CD4-positive, alpha-beta memory T cell (primary cell): ENCODE measurements at regions of chrX and their contacts with region 1.

Region 1: GRCh38 chrX:18984381-18985185 is 669 bp upstream of the PHKA2 start:
- DNase-seq: peak; percentile 85 to 89 (median 87)
- H3K4me3 ChIP-seq: peak overlapping the region in 1 of 2 donors; percentile 63
- H3K4me3 Mint-ChIP-seq: peak overlapping the region; percentile 75 to 88 (median 82)
- H3K27ac ChIP-seq: peak overlapping the region; percentile 70
- H3K27ac Mint-ChIP-seq: peak overlapping the region; percentile 82 to 97 (median 91)
- H3K4me1 ChIP-seq: peaks cover 21% of the 10 kb centered on the region
- H3K4me1 Mint-ChIP-seq: peaks cover 7 to 23% (median 14%) of the 10 kb centered on the region in 4 donors
- H3K27me3 ChIP-seq: no peaks in the 10 kb centered on the region
- H3K27me3 Mint-ChIP-seq: no peaks in the 10 kb centered on the region

Region 2: DNA sequence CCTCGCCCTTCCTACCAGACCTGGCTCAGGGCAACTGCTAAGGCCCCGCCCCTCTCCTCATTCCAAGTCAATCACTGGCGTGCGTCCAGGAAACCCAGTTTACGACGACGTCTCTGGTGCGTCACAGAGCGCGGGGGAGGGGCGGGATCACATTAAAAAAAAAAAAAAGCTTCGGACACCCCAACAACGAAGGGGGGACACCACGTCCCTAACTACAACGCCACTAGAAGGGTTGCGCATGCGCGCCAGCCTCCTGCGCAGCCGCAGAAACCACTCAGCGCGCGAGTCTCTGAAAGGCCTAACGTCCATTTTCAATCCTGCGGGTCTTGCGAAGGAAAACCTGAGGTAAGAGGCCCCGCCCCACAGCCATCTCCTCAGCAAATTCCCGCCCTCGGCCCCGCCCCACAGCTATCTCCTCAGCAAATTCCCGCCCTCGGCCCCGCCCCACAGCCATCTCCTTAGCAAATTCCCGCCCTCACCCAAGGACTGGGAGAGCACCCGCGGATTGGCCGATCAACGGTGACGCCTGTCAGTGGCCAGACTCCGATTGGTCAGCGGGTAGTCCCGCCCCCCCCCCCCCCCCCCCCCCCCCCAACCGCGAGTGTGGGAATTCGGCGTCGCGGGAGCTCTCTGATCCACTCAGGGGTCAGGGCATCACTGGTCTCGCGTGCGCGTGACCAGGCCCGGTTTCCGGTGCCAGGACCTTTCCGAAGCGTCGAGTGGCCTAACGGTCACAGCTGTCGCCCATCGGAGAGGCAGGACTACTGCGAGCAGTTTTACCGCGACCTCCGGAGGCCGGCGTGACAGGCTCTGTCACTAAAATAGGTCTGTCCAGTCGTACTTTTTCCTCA is 1247.5 kb before region 1 on chrX and contains the start of gene SCML1:
- CTCF ChIA-PET with region 1: no interaction called
- POLR2A ChIA-PET with region 1: no interaction called
- intact Hi-C with region 1: loop called (anchors 10 kb)
- DNase-seq: peak; percentile 78 to 90 (median 82)
- H3K4me3 ChIP-seq: peak within 1 kb of the TSS in 1 of 2 donors; percentile 50
- H3K4me3 Mint-ChIP-seq: peak within 1 kb of the TSS; percentile 86 to 97 (median 90)
- H3K27ac ChIP-seq: peak within 1 kb of the TSS; percentile 73
- H3K27ac Mint-ChIP-seq: peak within 1 kb of the TSS; percentile 86 to 98 (median 90)
- H3K4me1 ChIP-seq: peaks cover 15% of the 10 kb centered on the region
- H3K4me1 Mint-ChIP-seq: peaks cover 11 to 33% (median 22%) of the 10 kb centered on the region in 4 donors
- H3K27me3 ChIP-seq: no peaks in the 10 kb centered on the region
- H3K27me3 Mint-ChIP-seq: peaks cover 0 to 3% of the 10 kb centered on the region in 2 donors
- total RNA-seq, gene SCML1: 14.4 to 18.0 TPM

Region 3: DNA sequence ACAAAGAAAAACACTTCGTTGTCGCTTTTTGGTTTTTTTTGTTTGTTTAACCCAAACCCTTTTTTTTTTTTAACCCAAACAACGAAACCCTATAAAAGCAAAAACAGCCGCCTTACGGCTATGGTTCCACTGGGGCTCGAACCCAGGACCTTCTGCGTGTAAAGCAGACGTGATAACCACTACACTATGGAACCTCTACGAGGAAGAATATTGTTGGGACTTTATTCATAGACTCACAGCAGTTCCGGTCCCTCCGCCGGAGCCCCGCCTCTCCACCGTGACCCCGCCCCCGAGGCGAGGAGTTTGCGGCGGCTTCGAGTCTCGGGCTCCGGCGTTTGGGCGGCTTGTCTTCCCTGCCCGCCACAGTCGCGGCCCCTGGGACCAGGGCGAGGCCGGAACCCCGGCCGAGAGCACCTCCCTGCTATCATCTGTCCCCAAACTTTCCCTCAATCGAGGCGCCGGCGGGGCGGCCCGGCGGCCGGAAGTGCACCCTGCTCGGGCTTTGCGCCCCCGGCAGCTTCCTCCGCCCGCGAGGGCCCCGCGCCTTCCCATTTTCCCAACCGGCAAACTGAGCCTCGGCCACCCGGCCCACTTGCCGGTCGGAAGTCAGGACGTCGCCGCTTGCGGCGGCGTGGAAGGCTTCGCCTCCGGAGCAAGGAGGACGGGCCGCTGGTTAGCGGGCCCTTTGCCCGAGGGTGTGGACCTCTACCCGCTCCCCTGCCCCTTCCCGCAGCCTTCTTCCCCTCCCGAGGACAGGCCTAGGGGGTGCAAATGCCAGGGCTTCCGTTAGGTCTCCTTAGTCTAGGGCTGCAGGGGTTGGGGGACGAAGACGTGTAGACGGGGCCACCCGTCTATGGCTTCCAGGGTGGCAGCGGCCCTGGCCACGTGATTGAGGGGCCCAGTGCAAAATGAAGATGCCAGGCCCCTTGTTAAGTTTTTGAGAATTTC is 309.5 kb before region 1 on chrX:
- CTCF ChIA-PET with region 1: no interaction called
- POLR2A ChIA-PET with region 1: interaction called, 3 read pairs
- intact Hi-C with region 1: loop called (anchors 2 kb)
- DNase-seq: peak; percentile 80 to 87 (median 86)
- H3K4me3 ChIP-seq: peak overlapping the region; percentile 11 to 54
- H3K4me3 Mint-ChIP-seq: peak overlapping the region; percentile 78 to 87 (median 84)
- H3K27ac ChIP-seq: peak overlapping the region; percentile 67
- H3K27ac Mint-ChIP-seq: peak overlapping the region; percentile 46 to 97 (median 82)
- H3K4me1 ChIP-seq: no peaks in the 10 kb centered on the region
- H3K4me1 Mint-ChIP-seq: peaks cover 4 to 16% (median 8%) of the 10 kb centered on the region in 4 donors
- H3K27me3 ChIP-seq: no peaks in the 10 kb centered on the region
- H3K27me3 Mint-ChIP-seq: no peaks in the 10 kb centered on the region

Region 4: DNA sequence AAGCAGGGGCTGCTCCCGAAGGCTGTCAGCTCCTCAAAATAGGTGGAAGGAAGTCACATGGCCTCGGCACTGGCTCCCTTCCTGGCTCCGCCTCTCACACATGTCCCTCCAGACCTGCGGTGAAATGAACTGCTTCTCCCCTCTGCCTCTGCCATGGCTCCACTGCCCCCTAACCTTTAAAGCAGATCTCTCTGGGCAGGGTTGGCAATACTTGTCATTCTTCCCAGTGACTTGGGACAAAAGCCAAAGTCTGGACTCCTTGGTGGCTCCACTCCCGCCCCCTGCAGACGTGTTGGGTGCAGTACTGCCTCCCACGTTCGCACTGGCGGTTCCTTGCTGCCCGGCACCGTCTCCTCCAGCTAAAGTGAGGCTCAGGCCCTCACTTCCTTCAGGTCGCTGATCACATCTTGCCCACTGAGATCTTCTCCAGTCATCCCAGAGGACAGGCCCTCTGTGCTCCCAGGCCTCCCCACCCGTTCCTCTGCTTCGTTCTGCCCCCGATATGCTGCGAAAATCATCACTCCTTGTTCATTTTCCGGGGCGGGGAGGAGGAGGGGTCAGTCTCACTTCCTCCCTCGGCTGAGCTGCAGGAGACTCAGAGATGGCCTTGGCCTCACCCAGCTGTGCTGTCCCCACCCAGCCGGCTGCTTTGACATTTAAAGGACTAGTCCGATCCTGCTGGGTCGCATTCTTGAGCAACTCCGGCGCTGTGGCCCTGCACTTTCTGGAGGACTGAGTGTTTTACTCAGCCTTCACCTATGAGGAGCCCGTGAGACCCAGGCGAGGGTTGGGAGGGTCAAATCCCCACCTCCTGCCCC is 98.0 kb before region 1 on chrX:
- CTCF ChIA-PET with region 1: no interaction called
- POLR2A ChIA-PET with region 1: interaction called, 4 read pairs
- intact Hi-C with region 1: loop called (anchors 1 kb)
- DNase-seq: peak; percentile 32 to 42 (median 42)
- H3K4me3 ChIP-seq: peak overlapping the region in 1 of 2 donors; percentile 56
- H3K4me3 Mint-ChIP-seq: peak overlapping the region; percentile 84 to 94 (median 90)
- H3K27ac ChIP-seq: peak overlapping the region; percentile 28
- H3K27ac Mint-ChIP-seq: peak overlapping the region; percentile 82 to 98 (median 92)
- H3K4me1 ChIP-seq: peaks cover 14% of the 10 kb centered on the region
- H3K4me1 Mint-ChIP-seq: peaks cover 12 to 32% (median 20%) of the 10 kb centered on the region in 4 donors
- H3K27me3 ChIP-seq: no peaks in the 10 kb centered on the region
- H3K27me3 Mint-ChIP-seq: no peaks in the 10 kb centered on the region

Region 5: GRCh38 chrX:19094654-19095053 is 110.1 kb after region 1 on chrX:
- CTCF ChIA-PET with region 1: no interaction called
- POLR2A ChIA-PET with region 1: no interaction called
- intact Hi-C with region 1: no loop called
- DNase-seq: no peak
- H3K4me3 ChIP-seq: no peak overlapping the region
- H3K4me3 Mint-ChIP-seq: no peak overlapping the region
- H3K27ac ChIP-seq: no peak overlapping the region
- H3K27ac Mint-ChIP-seq: no peak overlapping the region
- H3K4me1 ChIP-seq: no peaks in the 10 kb centered on the region
- H3K4me1 Mint-ChIP-seq: no peaks in the 10 kb centered on the region
- H3K27me3 ChIP-seq: no peaks in the 10 kb centered on the region
- H3K27me3 Mint-ChIP-seq: peaks cover 3% of the 10 kb centered on the region in 2 donors

Region 6: GRCh38 chrX:19334945-19335626 is 350.5 kb after region 1 on chrX:
- CTCF ChIA-PET with region 1: interaction called, 3 read pairs
- POLR2A ChIA-PET with region 1: no interaction called
- intact Hi-C with region 1: loop called (anchors 2 kb)
- DNase-seq: peak in 3 of 5 donors; percentile 10 to 22 (median 20)
- H3K4me3 ChIP-seq: no peak overlapping the region
- H3K4me3 Mint-ChIP-seq: no peak overlapping the region
- H3K27ac ChIP-seq: no peak overlapping the region
- H3K27ac Mint-ChIP-seq: peak overlapping the region in 4 of 7 donors; percentile 22 to 73 (median 36)
- H3K4me1 ChIP-seq: no peaks in the 10 kb centered on the region
- H3K4me1 Mint-ChIP-seq: peaks cover 0 to 3% (median under 1%) of the 10 kb centered on the region in 4 donors
- H3K27me3 ChIP-seq: no peaks in the 10 kb centered on the region
- H3K27me3 Mint-ChIP-seq: peaks cover 0 to 2% of the 10 kb centered on the region in 2 donors

Region 7: DNA sequence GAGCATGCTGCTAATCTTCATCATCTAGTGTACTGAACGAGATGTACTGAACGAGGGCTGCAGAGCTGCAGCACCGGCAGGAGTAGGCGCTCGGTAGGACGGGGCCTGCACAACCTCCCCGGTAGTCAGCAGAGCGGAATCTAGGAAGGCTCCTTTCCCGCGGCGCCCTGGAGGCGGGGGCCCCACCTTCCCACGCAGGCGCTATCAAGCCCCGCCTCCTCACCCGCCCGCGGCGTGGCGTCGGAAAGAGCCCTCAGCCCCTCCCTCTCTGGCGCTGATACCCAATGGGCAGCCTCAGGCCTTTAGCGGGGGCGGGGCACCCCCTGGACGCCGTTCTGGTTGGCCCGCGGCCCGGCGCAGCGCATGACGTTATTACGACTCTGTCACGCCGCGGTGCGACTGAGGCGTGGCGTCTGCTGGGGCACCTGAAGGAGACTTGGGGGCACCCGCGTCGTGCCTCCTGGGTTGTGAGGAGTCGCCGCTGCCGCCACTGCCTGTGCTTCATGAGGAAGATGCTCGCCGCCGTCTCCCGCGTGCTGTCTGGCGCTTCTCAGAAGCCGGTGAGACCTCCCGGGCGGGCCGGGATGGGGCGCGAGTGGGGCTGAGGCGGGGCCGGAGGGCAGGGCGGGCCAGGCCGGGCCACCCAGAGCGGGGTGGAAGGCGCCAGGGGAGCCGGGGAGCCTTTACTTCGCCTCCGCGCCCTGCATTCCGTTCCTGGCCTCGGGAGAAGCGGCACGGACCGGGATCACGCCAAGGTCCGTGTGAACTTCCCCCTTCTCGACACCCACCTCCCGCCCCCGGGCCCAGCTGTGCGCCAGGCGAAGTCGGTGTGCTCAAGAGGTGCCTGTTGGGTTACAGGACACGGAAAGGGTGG is 359.2 kb after region 1 on chrX and contains the start of gene PDHA1:
- CTCF ChIA-PET with region 1: no interaction called
- POLR2A ChIA-PET with region 1: no interaction called
- intact Hi-C with region 1: loop called (anchors 1 kb)
- DNase-seq: peak; percentile 88 to 93 (median 92)
- H3K4me3 ChIP-seq: peak within 1 kb of the TSS; percentile 44 to 63
- H3K4me3 Mint-ChIP-seq: peak within 1 kb of the TSS; percentile 86 to 92 (median 88)
- H3K27ac ChIP-seq: peak within 1 kb of the TSS; percentile 83
- H3K27ac Mint-ChIP-seq: peak within 1 kb of the TSS; percentile 84 to 94 (median 92)
- H3K4me1 ChIP-seq: peaks cover 19% of the 10 kb centered on the region
- H3K4me1 Mint-ChIP-seq: peaks cover 8 to 21% (median 12%) of the 10 kb centered on the region in 4 donors
- H3K27me3 ChIP-seq: no peaks in the 10 kb centered on the region
- H3K27me3 Mint-ChIP-seq: no peaks in the 10 kb centered on the region
- total RNA-seq, gene PDHA1: 116 to 124 TPM